B cell (primary cell): ENCODE measurements at regions of chr1 and their contacts with region 1.

Region 1: DNA sequence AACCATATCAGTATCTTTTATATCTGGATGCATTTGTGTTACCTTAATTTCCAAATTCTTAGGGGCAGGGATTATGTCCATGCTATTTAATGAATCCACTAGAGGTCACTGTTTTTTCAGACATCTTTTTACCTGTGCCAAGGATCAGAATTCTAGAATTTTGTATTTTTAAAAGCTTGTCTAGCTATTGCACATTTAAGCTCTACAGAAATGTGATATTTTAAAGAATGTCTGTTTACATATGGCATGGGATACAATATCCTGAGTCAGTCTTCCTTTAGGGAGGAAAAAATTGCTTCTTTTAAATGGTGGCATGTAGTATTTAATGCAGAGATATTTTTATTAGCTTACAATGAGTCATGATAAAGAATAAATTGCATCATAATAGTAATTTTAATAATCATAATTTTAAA is 11.3 kb downstream of the RPAP2 start:
- DNase-seq: peak; percentile 26
- ATAC-seq: no peak
- H3K4me3 ChIP-seq: no peak overlapping the region
- H3K4me3 Mint-ChIP-seq: no peak overlapping the region
- H3K27ac ChIP-seq: no peak overlapping the region
- H3K27ac Mint-ChIP-seq: no peak overlapping the region
- H3K4me1 ChIP-seq: no peaks in the 10 kb centered on the region
- H3K4me1 Mint-ChIP-seq: no peaks in the 10 kb centered on the region
- H3K27me3 ChIP-seq: no peaks in the 10 kb centered on the region
- H3K27me3 Mint-ChIP-seq: no peaks in the 10 kb centered on the region
- CTCF ChIP-seq: peak; percentile 76

Region 2: GRCh38 chr1:91924146-91924545 is 386.0 kb before region 1 on chr1:
- CTCF ChIA-PET with region 1: no interaction called
- POLR2A ChIA-PET with region 1: no interaction called
- intact Hi-C with region 1: no loop called
- DNase-seq: no peak
- ATAC-seq: no peak
- H3K4me3 ChIP-seq: no peak overlapping the region
- H3K4me3 Mint-ChIP-seq: no peak overlapping the region
- H3K27ac ChIP-seq: no peak overlapping the region
- H3K27ac Mint-ChIP-seq: no peak overlapping the region
- H3K4me1 ChIP-seq: no peaks in the 10 kb centered on the region
- H3K4me1 Mint-ChIP-seq: no peaks in the 10 kb centered on the region
- H3K27me3 ChIP-seq: no peaks in the 10 kb centered on the region
- H3K27me3 Mint-ChIP-seq: peaks cover 3% of the 10 kb centered on the region
- CTCF ChIP-seq: no peak

Region 3: GRCh38 chr1:92599184-92599583 is 289.0 kb after region 1 on chr1:
- CTCF ChIA-PET with region 1: interaction called, 14 read pairs
- POLR2A ChIA-PET with region 1: no interaction called
- intact Hi-C with region 1: loop called (anchors 1 kb)
- DNase-seq: no peak
- ATAC-seq: no peak
- H3K4me3 ChIP-seq: no peak overlapping the region
- H3K4me3 Mint-ChIP-seq: no peak overlapping the region
- H3K27ac ChIP-seq: no peak overlapping the region
- H3K27ac Mint-ChIP-seq: no peak overlapping the region
- H3K4me1 ChIP-seq: no peaks in the 10 kb centered on the region
- H3K4me1 Mint-ChIP-seq: no peaks in the 10 kb centered on the region
- H3K27me3 ChIP-seq: no peaks in the 10 kb centered on the region
- H3K27me3 Mint-ChIP-seq: no peaks in the 10 kb centered on the region
- CTCF ChIP-seq: peak; percentile 39

Region 4: GRCh38 chr1:92623187-92623778 is 313.1 kb after region 1 on chr1:
- CTCF ChIA-PET with region 1: interaction called, 15 read pairs
- POLR2A ChIA-PET with region 1: no interaction called
- intact Hi-C with region 1: loop called (anchors 1 kb)
- DNase-seq: peak; percentile 9
- ATAC-seq: no peak
- H3K4me3 ChIP-seq: no peak overlapping the region
- H3K4me3 Mint-ChIP-seq: no peak overlapping the region
- H3K27ac ChIP-seq: no peak overlapping the region
- H3K27ac Mint-ChIP-seq: no peak overlapping the region
- H3K4me1 ChIP-seq: no peaks in the 10 kb centered on the region
- H3K4me1 Mint-ChIP-seq: no peaks in the 10 kb centered on the region
- H3K27me3 ChIP-seq: no peaks in the 10 kb centered on the region
- H3K27me3 Mint-ChIP-seq: no peaks in the 10 kb centered on the region
- CTCF ChIP-seq: peak; percentile 65